CD14-positive monocyte (primary cell): ENCODE measurements at regions of chr11 and their contacts with region 1.

Region 1: DNA sequence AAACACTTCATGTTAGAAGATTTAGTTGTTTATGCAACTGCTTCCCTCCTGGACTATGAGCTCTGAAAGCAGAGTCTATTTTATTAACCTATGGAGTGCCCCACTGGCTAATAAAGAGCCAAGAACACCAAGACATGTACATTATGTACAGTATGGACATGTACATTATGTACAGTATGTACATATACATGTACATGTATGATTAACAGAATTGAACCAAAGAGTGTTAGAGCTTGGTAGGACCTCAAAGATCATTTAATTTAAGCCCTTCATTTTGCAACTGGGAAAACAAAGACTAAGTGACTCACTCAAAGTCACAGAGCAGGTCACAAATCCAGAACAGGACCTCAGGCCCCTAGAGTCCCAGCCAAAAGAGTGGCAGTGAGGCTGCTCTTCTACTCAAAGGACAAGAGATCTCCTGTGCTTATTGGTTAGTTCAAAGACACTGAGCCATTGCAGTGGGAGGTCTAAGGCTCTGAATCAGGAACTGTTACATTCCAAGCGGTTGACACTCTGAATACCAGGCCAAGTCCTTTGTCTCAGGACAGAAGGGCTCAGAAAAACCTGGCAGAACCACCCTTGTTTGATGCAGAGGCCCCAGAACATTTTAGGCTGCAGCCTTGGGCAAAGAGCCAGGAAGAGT is 103.8 kb downstream of the FAM168A start:
- DNase-seq: no peak
- H3K4me3 ChIP-seq: no peak overlapping the region
- H3K4me3 Mint-ChIP-seq: no peak overlapping the region
- H3K27ac ChIP-seq: peak overlapping the region in 1 of 2 donors; percentile 45
- H3K27ac Mint-ChIP-seq: peak overlapping the region in 4 of 7 donors; percentile 15 to 73 (median 42)
- H3K4me1 ChIP-seq: peaks cover 22 to 24% of the 10 kb centered on the region in 2 donors
- H3K4me1 Mint-ChIP-seq: peaks cover 40% of the 10 kb centered on the region
- H3K27me3 ChIP-seq: no peaks in the 10 kb centered on the region
- H3K27me3 Mint-ChIP-seq: no peaks in the 10 kb centered on the region
- CTCF ChIP-seq: no peak

Region 2: GRCh38 chr11:73445980-73446379 is 48.1 kb before region 1 on chr11:
- intact Hi-C with region 1: loop called in 1 of 2 experiments (anchors 5 kb)
- DNase-seq: peak in 1 of 3 donors; percentile 16
- H3K4me3 ChIP-seq: no peak overlapping the region
- H3K4me3 Mint-ChIP-seq: no peak overlapping the region
- H3K27ac ChIP-seq: peak overlapping the region in 1 of 2 donors; percentile 10
- H3K27ac Mint-ChIP-seq: peak overlapping the region in 1 of 7 donors; percentile 52
- H3K4me1 ChIP-seq: peaks cover 4 to 16% of the 10 kb centered on the region in 2 donors
- H3K4me1 Mint-ChIP-seq: peaks cover 18% of the 10 kb centered on the region
- H3K27me3 ChIP-seq: no peaks in the 10 kb centered on the region
- H3K27me3 Mint-ChIP-seq: no peaks in the 10 kb centered on the region
- CTCF ChIP-seq: no peak

Region 3: DNA sequence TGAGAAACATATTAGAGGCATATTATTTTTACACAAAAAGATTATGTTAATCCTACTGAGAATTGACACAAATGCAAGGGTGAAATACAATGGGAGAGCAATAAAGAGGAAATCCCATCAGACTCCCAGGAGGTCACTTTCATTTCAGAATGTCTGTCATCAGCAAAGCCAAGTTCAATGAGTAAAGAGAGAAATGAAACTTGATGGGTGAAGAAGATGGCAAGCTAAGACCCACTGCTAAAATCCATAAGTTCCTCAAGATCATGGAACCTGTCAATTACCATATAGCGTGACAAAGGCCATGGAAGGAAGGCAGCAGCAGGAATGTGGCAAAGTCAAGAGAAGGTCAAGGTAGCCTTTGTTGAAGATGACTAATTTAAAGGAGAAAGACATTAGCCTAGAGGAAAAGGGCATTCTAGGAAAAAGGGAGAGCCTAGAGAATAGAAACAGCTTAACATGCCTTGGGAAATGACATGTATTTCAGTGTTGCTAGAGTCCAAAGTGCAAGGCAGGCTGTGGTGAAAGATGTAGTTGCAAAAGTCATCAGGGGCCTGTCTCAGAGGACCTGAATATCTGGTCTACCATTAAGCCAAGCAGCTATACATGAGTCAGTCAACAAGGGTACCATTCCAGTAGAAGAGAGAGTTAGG is 60.7 kb after region 1 on chr11:
- intact Hi-C with region 1: no loop called
- DNase-seq: peak; percentile 22 to 59 (median 45)
- H3K4me3 ChIP-seq: no peak overlapping the region
- H3K4me3 Mint-ChIP-seq: peak overlapping the region in 1 of 2 donors; percentile 77
- H3K27ac ChIP-seq: peak overlapping the region in 1 of 2 donors; percentile 69
- H3K27ac Mint-ChIP-seq: peak overlapping the region in 5 of 7 donors; percentile 41 to 86 (median 76)
- H3K4me1 ChIP-seq: peaks cover 10 to 12% of the 10 kb centered on the region in 2 donors
- H3K4me1 Mint-ChIP-seq: peaks cover 21% of the 10 kb centered on the region
- H3K27me3 ChIP-seq: no peaks in the 10 kb centered on the region
- H3K27me3 Mint-ChIP-seq: peaks cover 0 to 2% (median 0%) of the 10 kb centered on the region in 3 donors
- CTCF ChIP-seq: no peak